Breast epithelium (tissue), 4 donors: ENCODE measurements at regions of chr18 and their contacts with region 1.

Region 1: DNA sequence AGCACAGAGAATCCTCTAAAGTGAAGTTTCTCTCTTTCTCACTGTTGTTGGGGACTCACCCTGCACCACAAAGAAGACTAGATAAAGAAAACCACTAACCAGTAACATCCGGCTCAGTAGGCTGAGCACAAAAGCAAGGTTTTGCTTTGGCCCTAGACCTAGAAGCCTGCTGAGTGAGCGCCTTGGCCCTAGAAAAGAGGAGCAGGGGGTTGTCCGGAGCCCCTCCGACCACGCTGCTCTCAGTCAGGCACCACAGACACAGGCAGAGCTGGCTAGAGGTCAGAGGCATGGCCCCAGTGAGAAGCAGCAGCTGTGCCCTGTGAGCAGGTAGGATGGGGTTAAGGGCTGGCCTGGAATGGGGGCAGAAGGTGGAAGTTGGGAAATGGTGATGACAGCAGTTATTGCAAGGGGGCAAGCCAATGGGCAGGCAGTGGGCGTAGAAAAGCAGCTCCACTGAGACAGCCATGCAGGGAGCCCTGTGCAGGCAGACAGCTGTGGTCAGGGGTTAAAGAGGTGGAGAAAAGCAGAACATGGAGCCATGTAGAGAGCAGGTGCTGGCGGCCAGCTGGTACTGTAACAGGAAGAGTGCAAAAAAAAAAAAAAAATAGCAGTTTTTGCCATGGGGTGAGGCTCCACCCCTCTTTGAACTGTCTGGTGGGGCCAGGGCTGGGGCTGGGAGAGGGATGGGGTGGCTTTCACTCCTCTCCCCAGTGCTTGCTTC is 36.9 kb upstream of the SLC14A1 start:
- DNase-seq: no peak
- H3K4me3 ChIP-seq: no peak overlapping the region
- H3K27ac ChIP-seq: no peak overlapping the region
- H3K4me1 ChIP-seq: no peaks in the 10 kb centered on the region
- H3K27me3 ChIP-seq: no peaks in the 10 kb centered on the region
- CTCF ChIP-seq: no peak
- POLR2A ChIP-seq: no peak

Region 2: DNA sequence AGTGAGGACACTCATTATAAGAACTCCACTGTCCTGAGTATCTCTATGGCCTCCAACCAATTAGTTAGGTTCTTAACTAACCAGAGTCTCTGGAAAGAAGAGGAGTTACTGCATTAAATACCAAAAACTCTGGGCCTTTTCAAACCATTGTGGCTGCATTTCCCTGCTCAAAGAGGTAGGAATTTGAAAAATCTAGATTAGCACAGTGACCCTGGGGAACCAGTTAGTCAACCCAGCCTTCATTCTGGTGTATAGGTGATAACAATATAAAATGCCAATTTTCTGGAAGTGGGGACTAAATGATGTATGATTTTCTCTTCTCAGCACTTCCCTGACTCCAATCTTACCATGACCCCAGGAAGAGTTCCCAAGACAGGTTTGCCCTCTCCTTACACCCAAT is 1294.1 kb before region 1 on chr18:
- intact Hi-C with region 1: loop called (anchors 5 kb)
- DNase-seq: no peak
- H3K4me3 ChIP-seq: no peak overlapping the region
- H3K27ac ChIP-seq: no peak overlapping the region
- H3K4me1 ChIP-seq: no peaks in the 10 kb centered on the region
- H3K27me3 ChIP-seq: no peaks in the 10 kb centered on the region
- CTCF ChIP-seq: no peak
- POLR2A ChIP-seq: no peak

Region 3: DNA sequence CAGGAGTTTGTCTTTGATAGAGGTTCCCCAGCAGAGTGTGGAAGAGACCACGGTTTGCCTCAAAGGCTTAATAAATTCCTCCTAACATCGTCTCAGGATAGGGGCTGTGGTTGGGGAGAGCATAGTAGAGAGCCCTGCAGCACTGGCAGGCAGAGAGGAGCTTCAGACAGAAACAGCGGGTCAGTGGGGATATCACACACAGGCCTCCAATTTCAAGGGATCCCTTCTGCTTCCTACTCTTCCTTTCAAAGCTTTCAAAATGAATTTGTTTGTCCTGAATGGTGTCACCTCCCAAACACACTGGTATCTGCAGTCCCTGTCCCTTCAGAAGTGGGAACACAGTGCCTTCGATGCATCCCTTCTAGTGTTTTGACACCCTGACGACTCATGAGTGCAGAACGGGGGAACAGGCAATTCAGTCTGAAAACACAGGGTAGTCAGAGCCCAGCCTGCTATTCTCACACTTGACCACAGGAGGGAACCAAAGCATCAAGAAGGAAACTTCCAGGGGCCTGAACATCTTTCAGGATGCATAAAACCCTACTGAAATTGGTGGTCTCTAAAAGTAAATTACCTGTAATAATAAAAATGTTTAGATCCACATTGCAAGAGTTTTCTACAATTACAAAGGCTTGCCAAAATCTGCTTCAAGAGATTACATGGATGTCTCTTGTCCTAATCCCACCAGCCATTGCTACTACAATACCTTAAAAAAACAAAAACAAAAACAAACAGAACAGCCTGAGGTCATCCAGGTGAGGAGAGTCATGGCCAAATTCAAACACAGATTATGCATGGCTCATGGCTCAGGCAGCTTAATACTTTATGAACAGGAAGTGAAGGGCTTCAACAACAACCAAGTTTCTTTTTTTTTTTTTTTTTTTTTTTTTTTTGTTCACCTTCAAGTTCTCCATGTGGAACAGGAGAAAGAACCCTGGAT is 22.0 kb before region 1 on chr18:
- intact Hi-C with region 1: no loop called
- DNase-seq: peak in 1 of 2 donors; percentile 31
- H3K4me3 ChIP-seq: no peak overlapping the region
- H3K27ac ChIP-seq: no peak overlapping the region
- H3K4me1 ChIP-seq: no peaks in the 10 kb centered on the region
- H3K27me3 ChIP-seq: no peaks in the 10 kb centered on the region
- CTCF ChIP-seq: peak; percentile 68 to 94 (median 83)
- POLR2A ChIP-seq: no peak

Region 4: GRCh38 chr18:45702866-45703265 is 15.8 kb after region 1 on chr18:
- intact Hi-C with region 1: loop called (anchors 1 kb)
- DNase-seq: no peak
- H3K4me3 ChIP-seq: no peak overlapping the region
- H3K27ac ChIP-seq: no peak overlapping the region
- H3K4me1 ChIP-seq: no peaks in the 10 kb centered on the region
- H3K27me3 ChIP-seq: no peaks in the 10 kb centered on the region
- CTCF ChIP-seq: no peak
- POLR2A ChIP-seq: no peak